ENCODE measurements at regions of chr18 and their contacts with region 1.

Region 1: GRCh38 chr18:2606335-2606734 is 35.0 kb downstream of the NDC80 start:
- DNase-seq: peak in 3 of 14 experiments; percentile 53 to 62 (median 58)
- ATAC-seq: peak; percentile 70
- H3K4me3 ChIP-seq: no peak overlapping the region
- H3K4me3 Mint-ChIP-seq: peak overlapping the region; percentile 57
- H3K27ac ChIP-seq: peak overlapping the region in 1 of 2 donors; percentile 48
- H3K27ac Mint-ChIP-seq: peak overlapping the region; percentile 91
- H3K4me1 ChIP-seq: peaks cover 12% of the 10 kb centered on the region
- H3K4me1 Mint-ChIP-seq: peaks cover 58% of the 10 kb centered on the region
- H3K27me3 ChIP-seq: no peaks in the 10 kb centered on the region
- H3K27me3 Mint-ChIP-seq: no peaks in the 10 kb centered on the region
- CTCF ChIP-seq: no peak

Region 2: GRCh38 chr18:2070619-2071018 is 535.7 kb before region 1 on chr18:
- CTCF ChIA-PET with region 1: no interaction called
- POLR2A ChIA-PET with region 1: no interaction called
- intact Hi-C with region 1: no loop called
- DNase-seq: no peak
- ATAC-seq: no peak
- H3K4me3 ChIP-seq: no peak overlapping the region
- H3K4me3 Mint-ChIP-seq: no peak overlapping the region
- H3K27ac ChIP-seq: no peak overlapping the region
- H3K27ac Mint-ChIP-seq: no peak overlapping the region
- H3K4me1 ChIP-seq: no peaks in the 10 kb centered on the region
- H3K4me1 Mint-ChIP-seq: no peaks in the 10 kb centered on the region
- H3K27me3 ChIP-seq: no peaks in the 10 kb centered on the region
- H3K27me3 Mint-ChIP-seq: no peaks in the 10 kb centered on the region
- CTCF ChIP-seq: no peak

Region 3: DNA sequence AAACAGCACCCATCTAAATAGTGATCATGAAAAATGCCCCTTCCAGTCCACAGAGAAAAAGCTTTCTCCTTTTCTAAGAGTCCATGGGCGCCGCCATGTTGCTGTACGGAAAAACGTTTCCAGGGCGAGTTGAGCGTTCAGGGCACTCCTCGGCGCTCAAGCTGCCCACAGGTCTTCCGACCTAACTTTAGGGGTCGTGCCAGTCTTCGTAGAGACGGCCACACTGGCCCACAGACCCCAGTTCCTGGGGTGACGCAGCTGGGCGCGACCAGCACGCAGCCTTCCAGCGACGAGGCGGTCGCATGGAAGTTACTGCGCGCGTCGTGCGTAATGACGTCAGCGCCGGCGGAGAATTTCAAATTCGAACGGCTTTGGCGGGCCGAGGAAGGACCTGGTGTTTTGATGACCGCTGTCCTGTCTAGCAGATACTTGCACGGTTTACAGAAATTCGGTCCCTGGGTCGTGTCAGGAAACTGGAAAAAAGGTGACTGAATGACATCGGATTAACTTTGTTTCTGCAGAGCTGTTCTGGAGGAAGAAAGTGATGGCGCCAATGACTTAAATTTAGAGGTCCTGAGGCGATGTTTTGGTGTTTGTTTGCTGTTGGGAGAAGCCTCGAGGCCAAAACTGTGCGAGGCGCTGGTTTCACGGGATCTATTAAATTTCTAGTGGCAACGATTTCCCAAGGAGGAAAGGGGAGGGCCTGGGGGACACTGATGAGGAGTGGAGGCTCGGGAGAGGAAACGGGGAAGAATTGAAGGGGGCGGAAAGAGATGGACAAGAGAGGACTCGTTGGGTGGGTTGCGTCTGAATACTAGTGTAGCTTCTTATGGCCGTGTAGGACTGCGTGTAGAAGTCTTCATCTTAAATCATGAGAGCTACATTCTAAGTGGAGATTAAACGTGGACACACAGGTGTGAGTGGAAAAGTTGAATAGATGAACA is 34.9 kb before region 1 on chr18 and contains the starts of genes METTL4 and NDC80:
- CTCF ChIA-PET with region 1: interaction called, 3 read pairs
- POLR2A ChIA-PET with region 1: interaction called, 48 read pairs
- intact Hi-C with region 1: loop called (anchors 1 to 5 kb)
- DNase-seq: peak; percentile 71 to 94 (median 78)
- ATAC-seq: peak; percentile 81
- H3K4me3 ChIP-seq: peak within 1 kb of the TSS; percentile 90
- H3K4me3 Mint-ChIP-seq: peak within 1 kb of the TSS; percentile 100
- H3K27ac ChIP-seq: peak within 1 kb of the TSS; percentile 90 to 99
- H3K27ac Mint-ChIP-seq: peak within 1 kb of the TSS; percentile 99
- H3K4me1 ChIP-seq: peaks cover 27% of the 10 kb centered on the region
- H3K4me1 Mint-ChIP-seq: peaks cover 70% of the 10 kb centered on the region
- H3K27me3 ChIP-seq: no peaks in the 10 kb centered on the region
- H3K27me3 Mint-ChIP-seq: no peaks in the 10 kb centered on the region
- CTCF ChIP-seq: no peak
- total RNA-seq, gene METTL4: 6.5 to 10.4 TPM
- total RNA-seq, gene NDC80: 6.3 to 7.5 TPM

Region 4: DNA sequence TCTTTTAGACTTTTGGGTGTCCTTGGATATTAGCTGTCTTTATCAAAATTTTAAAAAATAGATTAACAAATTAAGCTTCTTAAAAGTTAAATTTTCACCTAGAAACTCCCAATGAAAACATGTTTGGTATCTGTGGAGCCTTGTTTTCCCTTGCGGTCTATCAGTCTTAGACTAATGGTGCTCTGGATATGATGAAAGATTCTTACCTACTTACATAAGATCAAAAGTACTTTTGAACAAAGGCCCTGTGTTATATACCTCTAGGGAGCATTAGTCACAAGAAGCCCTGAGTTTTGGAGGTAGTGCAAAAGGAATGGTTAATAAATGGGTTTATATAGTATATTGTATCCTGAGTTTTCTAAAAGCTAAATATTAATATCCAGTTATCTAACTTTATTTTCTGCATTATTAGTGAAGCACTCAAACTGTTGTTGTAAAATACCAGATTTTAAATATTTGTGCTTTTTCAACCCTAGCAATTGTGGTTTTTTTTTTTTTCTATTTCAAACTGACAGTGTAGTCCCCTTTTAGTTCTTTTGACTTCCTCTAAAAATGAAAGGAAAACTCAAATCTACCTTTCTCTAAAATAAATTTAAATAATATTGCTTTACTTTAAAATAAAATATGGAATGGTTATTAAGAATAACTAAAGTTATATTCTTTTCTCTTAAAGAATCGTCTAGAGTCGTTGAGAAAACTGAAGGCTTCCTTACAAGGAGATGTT is 16.8 kb before region 1 on chr18:
- CTCF ChIA-PET with region 1: no interaction called
- POLR2A ChIA-PET with region 1: interaction called, 28 read pairs
- intact Hi-C with region 1: loop called in 1 of 2 experiments (anchors 2 kb)
- DNase-seq: peak in 4 of 14 experiments; percentile 7 to 54 (median 50)
- ATAC-seq: peak; percentile 86
- H3K4me3 ChIP-seq: peak overlapping the region; percentile 41
- H3K4me3 Mint-ChIP-seq: peak overlapping the region; percentile 78
- H3K27ac ChIP-seq: peak overlapping the region; percentile 47 to 84
- H3K27ac Mint-ChIP-seq: peak overlapping the region; percentile 89
- H3K4me1 ChIP-seq: peaks cover 15% of the 10 kb centered on the region
- H3K4me1 Mint-ChIP-seq: peaks cover 52% of the 10 kb centered on the region
- H3K27me3 ChIP-seq: no peaks in the 10 kb centered on the region
- H3K27me3 Mint-ChIP-seq: no peaks in the 10 kb centered on the region
- CTCF ChIP-seq: no peak

Region 5: DNA sequence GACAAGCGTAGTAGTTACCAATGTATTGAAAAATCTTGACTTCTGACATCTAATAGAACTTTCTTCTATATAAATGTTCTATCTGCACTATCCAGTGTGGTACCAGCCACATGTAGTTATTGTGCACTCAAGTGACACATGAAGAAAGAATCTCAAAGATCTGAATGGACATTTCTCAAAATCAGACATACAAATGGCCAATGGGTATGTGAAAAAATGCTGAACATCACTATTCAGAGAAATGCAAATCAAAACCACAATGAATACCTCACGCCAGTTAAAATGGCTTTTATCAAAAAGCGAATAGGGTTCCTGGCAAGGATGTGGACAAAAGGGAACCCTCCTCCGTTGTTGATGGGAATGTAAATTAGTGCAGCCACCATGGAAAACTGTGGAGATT is 11.7 kb after region 1 on chr18:
- CTCF ChIA-PET with region 1: no interaction called
- POLR2A ChIA-PET with region 1: interaction called, 3 read pairs
- intact Hi-C with region 1: loop called in 1 of 2 experiments (anchors 1 kb)
- DNase-seq: no peak
- ATAC-seq: no peak
- H3K4me3 ChIP-seq: no peak overlapping the region
- H3K4me3 Mint-ChIP-seq: no peak overlapping the region
- H3K27ac ChIP-seq: no peak overlapping the region
- H3K27ac Mint-ChIP-seq: no peak overlapping the region
- H3K4me1 ChIP-seq: no peaks in the 10 kb centered on the region
- H3K4me1 Mint-ChIP-seq: no peaks in the 10 kb centered on the region
- H3K27me3 ChIP-seq: no peaks in the 10 kb centered on the region
- H3K27me3 Mint-ChIP-seq: no peaks in the 10 kb centered on the region
- CTCF ChIP-seq: no peak

Region 6: GRCh38 chr18:2641638-2642037 is 35.3 kb after region 1 on chr18:
- CTCF ChIA-PET with region 1: interaction called, 8 read pairs
- POLR2A ChIA-PET with region 1: interaction called, 250 read pairs
- intact Hi-C with region 1: loop called (anchors 1 to 5 kb)
- DNase-seq: peak in 3 of 14 experiments; percentile 71 to 87 (median 76)
- ATAC-seq: peak; percentile 17
- H3K4me3 ChIP-seq: peak overlapping the region; percentile 32
- H3K4me3 Mint-ChIP-seq: peak overlapping the region; percentile 72
- H3K27ac ChIP-seq: peak overlapping the region; percentile 48 to 65
- H3K27ac Mint-ChIP-seq: no peak overlapping the region
- H3K4me1 ChIP-seq: peaks cover 74% of the 10 kb centered on the region
- H3K4me1 Mint-ChIP-seq: peaks cover 55% of the 10 kb centered on the region
- H3K27me3 ChIP-seq: no peaks in the 10 kb centered on the region
- H3K27me3 Mint-ChIP-seq: no peaks in the 10 kb centered on the region
- CTCF ChIP-seq: no peak

Measured in CD4-positive, alpha-beta T cell (primary cell).